Posterior cingulate gyrus (tissue), 11 donors: ENCODE measurements at regions of chr5 and their contacts with region 1.

Region 1: DNA sequence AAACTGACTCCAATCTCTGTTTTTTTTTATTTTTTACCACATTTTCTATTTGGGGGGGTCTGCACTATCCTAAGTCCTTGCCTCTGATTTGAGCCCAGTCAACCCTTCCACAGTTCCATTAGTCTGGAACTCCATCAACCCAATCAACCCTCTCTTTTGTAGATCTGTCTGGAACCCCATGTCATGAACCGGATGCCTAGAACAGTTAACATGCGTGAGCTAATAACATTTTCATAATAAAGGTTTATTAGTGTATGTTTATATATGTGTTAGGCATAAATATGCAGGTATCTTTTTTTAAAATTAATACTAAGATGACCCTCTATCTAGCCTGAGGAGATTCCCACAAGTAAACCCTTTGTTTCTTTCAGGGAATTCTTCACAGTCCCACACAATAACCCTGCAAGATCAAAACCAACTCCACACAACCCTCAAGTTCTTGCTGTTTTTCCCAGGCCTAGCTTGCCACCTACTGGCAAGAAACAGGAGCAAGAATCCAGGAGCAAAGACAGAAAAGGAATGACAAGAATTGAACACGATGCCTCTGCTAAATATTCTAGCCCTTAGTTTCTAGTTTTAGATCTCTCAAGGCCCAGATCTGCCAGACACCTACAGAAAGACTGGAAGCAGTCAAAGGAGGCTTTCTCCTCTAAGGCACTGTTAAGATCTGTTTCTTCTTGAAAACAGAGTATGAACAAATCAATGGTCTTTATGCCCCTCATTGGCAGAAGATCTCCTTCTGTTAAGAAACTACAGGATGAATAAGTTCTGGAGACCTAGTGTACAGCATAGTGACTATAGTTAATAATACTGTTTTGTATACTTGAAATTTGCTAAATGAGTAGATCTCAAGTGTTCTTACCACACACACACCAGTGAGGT is 100.4 kb downstream of the TRIM36 start:
- DNase-seq: peak in 7 of 10 donors; percentile 17 to 84 (median 32)

Region 2: GRCh38 chr5:113612060-113612496 is 1457.2 kb before region 1 on chr5:
- intact Hi-C with region 1: loop called (anchors 5 kb)
- DNase-seq: no peak

Region 3: DNA sequence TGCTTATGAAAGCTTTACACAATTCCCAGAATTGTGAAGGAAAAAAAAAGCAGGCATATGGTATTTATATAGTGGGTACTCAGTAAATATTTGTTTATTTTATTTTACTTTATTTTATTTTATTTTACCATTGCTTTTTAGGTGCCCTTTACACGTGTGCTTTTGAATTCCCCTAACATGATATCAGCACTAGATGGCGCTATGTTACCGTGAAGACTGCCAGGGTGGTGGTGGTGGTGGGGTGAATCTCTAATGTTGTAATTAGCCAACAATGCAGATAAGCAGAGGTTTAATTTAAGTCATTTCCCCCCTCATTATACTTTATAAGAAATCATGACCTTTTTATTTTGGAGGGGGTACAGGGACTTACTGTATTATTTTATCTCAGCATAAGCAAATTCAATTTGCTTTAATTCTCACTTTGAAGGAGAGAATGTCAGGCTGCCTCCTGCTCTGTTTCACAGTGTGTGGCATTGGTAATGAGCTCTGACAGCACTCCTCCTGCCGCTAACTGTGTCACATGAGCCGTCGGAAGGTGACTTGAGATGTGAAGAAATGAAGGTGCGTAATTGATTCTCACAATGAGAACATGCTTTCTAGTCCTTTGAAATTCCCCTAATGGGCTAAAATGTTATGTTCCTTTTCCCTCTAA is 1390.3 kb before region 1 on chr5:
- intact Hi-C with region 1: loop called (anchors 5 kb)
- DNase-seq: peak in 6 of 10 donors; percentile 17 to 81 (median 30)

Region 4: DNA sequence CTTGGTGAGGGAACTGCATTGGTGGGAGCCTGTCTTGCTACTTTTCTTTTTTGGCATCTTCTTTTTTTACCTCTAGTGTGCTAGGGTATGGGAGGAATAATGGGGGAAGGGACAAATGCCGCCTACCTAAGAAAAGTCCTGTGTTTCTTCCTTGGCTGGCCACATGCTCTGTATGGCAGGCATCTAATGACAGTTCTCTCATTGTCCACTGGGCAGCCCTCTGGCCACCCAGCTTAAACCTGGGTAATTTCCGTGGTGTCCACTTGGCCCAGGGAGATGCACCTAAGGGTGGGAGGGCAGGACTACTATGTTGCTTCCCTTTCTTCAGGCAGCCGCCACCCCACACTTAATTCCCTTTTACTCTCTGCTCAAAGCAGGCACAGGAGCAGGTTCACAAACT is 1382.7 kb before region 1 on chr5:
- intact Hi-C with region 1: loop called (anchors 5 kb)
- DNase-seq: no peak

Region 5: GRCh38 chr5:114018186-114018585 is 1051.1 kb before region 1 on chr5:
- intact Hi-C with region 1: loop called (anchors 2 kb)
- DNase-seq: peak in 1 of 10 donors; percentile 3

Region 6: GRCh38 chr5:114935490-114935889 is 133.8 kb before region 1 on chr5:
- intact Hi-C with region 1: no loop called
- DNase-seq: no peak